Heart right ventricle (tissue), 16 donors: ENCODE measurements at regions of chr5 and their contacts with region 1.

Region 1: GRCh38 chr5:56270568-56271392 is 37.6 kb upstream of the ANKRD55 start:
- DNase-seq: peak; percentile 80 to 85
- ATAC-seq: peak; percentile 98 to 100 (median 99)
- H3K4me3 ChIP-seq: no peak overlapping the region
- H3K27ac ChIP-seq: peak overlapping the region in 2 of 10 donors; percentile 5 to 58
- H3K4me1 ChIP-seq: peaks cover 0 to 20% (median 8%) of the 10 kb centered on the region in 9 donors
- H3K27me3 ChIP-seq: no peaks in the 10 kb centered on the region
- CTCF ChIP-seq: peak; percentile 92 to 100 (median 99)

Region 2: DNA sequence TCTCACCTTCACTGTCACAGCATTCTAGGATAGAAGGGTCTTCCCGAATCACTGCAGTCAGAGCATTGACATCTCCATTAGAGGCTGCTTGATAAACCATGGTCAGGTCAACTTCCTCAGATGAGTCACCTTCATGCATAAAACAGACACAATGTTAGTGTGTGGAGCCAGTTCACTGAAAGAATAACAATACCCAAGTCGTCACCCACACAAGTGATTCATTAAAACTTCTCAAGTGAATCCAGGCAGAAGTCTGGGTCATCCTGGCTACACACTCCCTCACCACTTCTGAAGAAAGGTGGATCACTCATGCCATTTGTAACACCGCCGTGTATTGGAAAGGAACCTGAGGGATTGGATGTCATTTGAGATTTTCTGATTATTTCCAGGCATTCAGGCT is 87.3 kb before region 1 on chr5:
- intact Hi-C with region 1: no loop called
- DNase-seq: no peak
- ATAC-seq: peak in 1 of 8 donors; percentile 30
- H3K4me3 ChIP-seq: no peak overlapping the region
- H3K27ac ChIP-seq: no peak overlapping the region
- H3K4me1 ChIP-seq: peaks cover 0 to 11% (median 0%) of the 10 kb centered on the region in 9 donors
- H3K27me3 ChIP-seq: no peaks in the 10 kb centered on the region
- CTCF ChIP-seq: no peak

Region 3: GRCh38 chr5:56481428-56482357 is 210.9 kb after region 1 on chr5:
- intact Hi-C with region 1: loop called in 5 of 10 experiments (anchors 10 kb)
- DNase-seq: peak; percentile 45 to 80
- ATAC-seq: peak; percentile 48 to 75 (median 60)
- H3K4me3 ChIP-seq: peak overlapping the region; percentile 29 to 76 (median 66)
- H3K27ac ChIP-seq: peak overlapping the region; percentile 86 to 99 (median 96)
- H3K4me1 ChIP-seq: peaks cover 0 to 52% (median 16%) of the 10 kb centered on the region in 9 donors
- H3K27me3 ChIP-seq: no peaks in the 10 kb centered on the region
- CTCF ChIP-seq: peak in 7 of 9 donors; percentile 21 to 56 (median 36)

Region 4: GRCh38 chr5:56696900-56697299 is 426.1 kb after region 1 on chr5:
- intact Hi-C with region 1: loop called in 1 of 10 experiments (anchors 10 kb)
- DNase-seq: peak in 1 of 2 donors; percentile 49
- ATAC-seq: no peak
- H3K4me3 ChIP-seq: no peak overlapping the region
- H3K27ac ChIP-seq: peak overlapping the region in 2 of 10 donors; percentile 7 to 30
- H3K4me1 ChIP-seq: peaks cover 4 to 42% (median 23%) of the 10 kb centered on the region in 9 donors
- H3K27me3 ChIP-seq: no peaks in the 10 kb centered on the region
- CTCF ChIP-seq: no peak

Region 5: DNA sequence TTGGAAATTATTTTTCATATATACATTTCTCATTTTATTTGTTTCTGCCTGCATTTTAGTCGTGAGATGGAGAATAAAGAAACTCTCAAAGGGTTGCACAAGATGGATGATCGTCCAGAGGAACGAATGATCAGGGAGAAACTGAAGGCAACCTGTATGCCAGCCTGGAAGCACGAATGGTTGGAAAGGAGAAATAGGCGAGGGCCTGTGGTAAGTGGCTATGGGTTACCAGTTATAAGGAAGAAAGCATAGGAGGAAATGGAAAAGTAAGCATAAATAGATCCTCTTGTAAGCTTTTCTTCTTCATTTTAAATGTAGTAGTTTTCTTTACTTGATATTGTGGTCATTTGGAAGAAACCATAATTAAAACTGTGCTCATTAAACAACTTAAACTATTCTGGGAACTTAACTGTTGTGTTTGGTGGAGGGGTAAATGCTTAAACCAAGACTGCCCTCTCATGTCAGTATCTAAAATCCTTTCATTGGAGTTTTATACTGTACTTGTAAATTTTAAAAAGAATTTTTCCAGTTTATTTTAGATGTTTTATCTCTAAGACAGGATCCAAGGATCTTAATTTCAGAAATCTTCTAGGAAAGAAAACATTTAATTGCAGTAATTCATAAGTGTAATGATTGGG is 585.9 kb after region 1 on chr5:
- intact Hi-C with region 1: loop called in 1 of 10 experiments (anchors 5 kb)
- DNase-seq: no peak
- ATAC-seq: peak in 2 of 8 donors; percentile 32 to 49
- H3K4me3 ChIP-seq: no peak overlapping the region
- H3K27ac ChIP-seq: no peak overlapping the region
- H3K4me1 ChIP-seq: peaks cover 3 to 65% (median 55%) of the 10 kb centered on the region in 9 donors
- H3K27me3 ChIP-seq: no peaks in the 10 kb centered on the region
- CTCF ChIP-seq: peak in 5 of 9 donors; percentile 21 to 38 (median 27)

Region 6: GRCh38 chr5:57221049-57221568 is 950.3 kb after region 1 on chr5:
- intact Hi-C with region 1: loop called in 2 of 10 experiments (anchors 5 to 10 kb)
- DNase-seq: peak in 1 of 2 donors; percentile 48
- ATAC-seq: peak in 6 of 8 donors; percentile 29 to 79 (median 68)
- H3K4me3 ChIP-seq: no peak overlapping the region
- H3K27ac ChIP-seq: no peak overlapping the region
- H3K4me1 ChIP-seq: peaks cover 0 to 25% (median 15%) of the 10 kb centered on the region in 9 donors
- H3K27me3 ChIP-seq: no peaks in the 10 kb centered on the region
- CTCF ChIP-seq: peak; percentile 83 to 96 (median 92)